ENCODE measurements at regions of chr1 and their contacts with region 1.

Region 1: DNA sequence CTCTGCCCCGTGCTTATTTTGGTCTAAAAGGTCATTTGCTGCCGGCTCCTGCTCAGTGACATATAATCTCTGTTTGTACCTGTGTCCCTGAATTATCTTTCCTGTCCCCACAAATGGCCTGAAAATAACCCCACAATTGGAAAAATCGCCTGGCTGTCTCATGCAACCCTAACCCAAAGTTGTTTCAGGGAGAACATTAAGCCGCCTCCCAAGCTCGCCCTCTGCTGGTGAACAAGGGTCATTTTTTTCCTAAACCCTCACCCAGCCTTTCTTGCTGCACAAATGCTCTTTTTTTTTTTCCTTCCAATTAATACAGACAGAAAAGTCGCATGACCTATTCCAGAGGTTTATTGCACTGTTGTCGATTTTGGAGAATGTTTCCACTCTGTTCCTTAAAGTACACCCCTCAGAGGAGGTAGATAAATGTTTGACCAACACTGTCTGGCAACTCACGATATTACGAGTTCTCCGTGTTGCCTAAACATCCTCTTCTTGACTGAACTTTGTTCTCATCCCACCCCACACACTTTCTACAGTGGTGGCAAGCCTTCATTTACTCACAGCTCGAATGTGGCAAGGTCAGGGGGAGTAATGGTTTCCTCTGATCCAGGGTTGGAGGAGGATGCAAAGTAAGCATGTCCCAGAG is 148.7 kb downstream of the ZZZ3 start:
- DNase-seq: peak; percentile 80
- H3K4me3 ChIP-seq: no peak overlapping the region
- H3K27ac ChIP-seq: no peak overlapping the region
- H3K4me1 ChIP-seq: peaks cover 22% of the 10 kb centered on the region
- H3K27me3 ChIP-seq: no peaks in the 10 kb centered on the region
- CTCF ChIP-seq: peak; percentile 77 to 81
- POLR2A ChIP-seq: no peak

Region 2: GRCh38 chr1:76901158-76901767 is 632.5 kb before region 1 on chr1:
- CTCF ChIA-PET with region 1: no interaction called
- POLR2A ChIA-PET with region 1: no interaction called
- dilution Hi-C with region 1: no loop called
- intact Hi-C with region 1: loop called (anchors 5 kb)
- DNase-seq: peak; percentile 41
- H3K4me3 ChIP-seq: no peak overlapping the region
- H3K27ac ChIP-seq: no peak overlapping the region
- H3K4me1 ChIP-seq: no peaks in the 10 kb centered on the region
- H3K27me3 ChIP-seq: no peaks in the 10 kb centered on the region
- CTCF ChIP-seq: peak; percentile 58 to 72
- POLR2A ChIP-seq: no peak

Region 3: DNA sequence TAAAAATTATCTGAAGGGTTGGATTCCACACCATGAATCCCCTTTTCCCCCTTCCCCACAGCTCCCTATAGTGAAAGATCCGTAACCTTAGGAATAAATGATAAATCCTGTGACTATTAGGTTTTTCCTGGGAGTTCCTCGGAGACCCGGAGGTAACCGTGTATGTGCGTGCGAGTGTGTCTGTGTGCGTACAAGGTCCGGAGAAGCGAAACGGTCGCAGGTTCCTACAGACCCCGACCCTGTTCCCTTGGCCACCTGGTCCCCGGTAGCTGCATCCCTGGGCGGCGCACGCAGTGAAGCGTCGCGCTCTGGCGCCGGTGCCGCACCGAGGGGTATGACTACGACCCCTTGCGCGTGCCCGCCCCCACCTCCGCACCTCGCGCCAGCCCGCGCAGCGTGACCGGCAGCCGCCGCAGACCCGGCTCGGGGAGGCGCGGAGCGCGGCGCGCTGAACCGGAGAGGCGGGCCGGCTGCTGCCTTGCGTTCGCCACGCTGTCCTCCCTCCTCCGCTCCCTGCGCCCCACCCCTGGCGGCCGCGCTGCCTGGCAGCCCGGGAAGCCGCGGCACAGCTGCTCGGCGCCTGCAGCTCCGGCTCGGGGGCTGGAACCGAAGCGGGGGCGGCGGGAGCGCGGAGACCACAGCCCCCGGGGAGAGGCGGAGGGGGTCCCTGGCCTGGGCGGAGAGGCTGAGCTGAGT is 252.1 kb before region 1 on chr1 and contains the start of gene AK5:
- CTCF ChIA-PET with region 1: interaction called, 9 read pairs
- POLR2A ChIA-PET with region 1: no interaction called
- dilution Hi-C with region 1: no loop called
- intact Hi-C with region 1: loop called (anchors 1 kb)
- DNase-seq: peak; percentile 59
- H3K4me3 ChIP-seq: peak within 1 kb of the TSS; percentile 42 to 62 (median 57)
- H3K27ac ChIP-seq: no peak within 1 kb of the TSS
- H3K4me1 ChIP-seq: peaks cover 17% of the 10 kb centered on the region
- H3K27me3 ChIP-seq: peaks cover 3 to 21% of the 10 kb centered on the region in 2 experiments
- CTCF ChIP-seq: no peak
- POLR2A ChIP-seq: no peak
- total RNA-seq, gene AK5: 3.3 and 7.5 TPM in 2 replicates

Region 4: DNA sequence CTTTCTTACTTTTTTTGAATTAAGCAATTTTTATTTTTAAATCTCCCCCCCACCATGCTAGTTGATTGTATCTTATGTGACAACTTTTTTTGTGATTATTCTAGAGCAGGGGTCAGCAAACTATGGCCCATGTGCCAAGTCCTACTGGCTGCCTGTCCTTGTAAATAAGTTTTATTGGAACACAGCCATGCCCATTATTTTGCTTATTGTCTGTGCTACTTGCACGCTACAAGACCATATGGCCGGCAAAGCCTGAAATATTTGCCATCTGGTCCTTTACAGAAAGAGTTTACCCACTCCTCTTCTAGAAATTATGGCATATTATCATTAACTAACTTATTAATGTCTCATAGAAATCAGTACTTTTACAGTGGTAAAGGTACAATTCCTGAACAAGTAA is 200.3 kb before region 1 on chr1:
- CTCF ChIA-PET with region 1: no interaction called
- POLR2A ChIA-PET with region 1: no interaction called
- dilution Hi-C with region 1: no loop called
- intact Hi-C with region 1: no loop called
- DNase-seq: no peak
- H3K4me3 ChIP-seq: no peak overlapping the region
- H3K27ac ChIP-seq: no peak overlapping the region
- H3K4me1 ChIP-seq: no peaks in the 10 kb centered on the region
- H3K27me3 ChIP-seq: no peaks in the 10 kb centered on the region
- CTCF ChIP-seq: no peak
- POLR2A ChIP-seq: no peak

Region 5: DNA sequence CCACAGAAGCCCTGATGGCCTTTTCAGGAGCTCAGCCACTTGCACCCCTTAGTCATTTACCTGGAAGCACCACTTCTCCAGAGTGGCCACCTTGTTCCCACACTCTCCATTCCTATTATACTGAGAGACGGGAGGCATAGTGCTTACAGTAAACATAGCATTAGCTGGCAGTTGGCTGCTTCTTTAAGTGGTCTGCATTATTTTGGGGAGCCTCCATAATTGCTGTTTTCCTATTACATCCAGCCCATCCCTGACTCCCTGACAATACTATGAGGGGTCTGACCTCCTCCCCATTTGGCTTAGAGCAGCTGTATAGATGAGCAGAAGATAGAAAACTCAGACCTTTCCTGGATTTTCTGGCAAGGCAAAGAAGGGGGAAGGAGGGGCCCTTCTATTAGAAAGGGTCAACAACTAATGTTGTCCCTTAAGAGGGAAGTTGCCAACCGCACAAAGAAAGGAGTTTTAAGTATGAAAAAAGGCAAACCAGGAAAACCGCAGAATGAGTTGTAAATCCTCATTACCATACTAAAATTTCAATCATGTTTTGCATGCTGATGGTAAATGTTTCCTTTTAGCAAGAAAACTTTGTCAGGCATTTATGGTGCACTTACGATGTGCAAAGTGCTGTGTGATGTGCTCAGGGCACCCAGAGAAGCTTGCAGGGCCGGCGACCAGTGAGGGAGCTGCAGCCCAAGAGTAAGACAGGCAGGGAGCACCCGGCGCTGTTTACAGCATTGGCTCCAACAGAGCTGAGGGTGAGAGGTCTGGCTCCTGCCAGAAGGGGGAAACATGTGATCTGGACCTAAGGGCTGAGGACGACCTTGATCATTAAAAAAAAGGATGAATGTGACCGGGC is 18.6 kb before region 1 on chr1:
- CTCF ChIA-PET with region 1: interaction called, 45 read pairs
- POLR2A ChIA-PET with region 1: no interaction called
- dilution Hi-C with region 1: no loop called
- intact Hi-C with region 1: loop called (anchors 1 kb)
- DNase-seq: peak; percentile 68
- H3K4me3 ChIP-seq: no peak overlapping the region
- H3K27ac ChIP-seq: peak overlapping the region; percentile 74
- H3K4me1 ChIP-seq: peaks cover 32% of the 10 kb centered on the region
- H3K27me3 ChIP-seq: no peaks in the 10 kb centered on the region
- CTCF ChIP-seq: peak in 1 of 2 donors; percentile 24
- POLR2A ChIP-seq: no peak

Region 6: GRCh38 chr1:77900687-77901293 is 367.0 kb after region 1 on chr1:
- CTCF ChIA-PET with region 1: interaction called, 4 read pairs
- POLR2A ChIA-PET with region 1: no interaction called
- dilution Hi-C with region 1: no loop called
- intact Hi-C with region 1: loop called (anchors 10 kb)
- DNase-seq: peak; percentile 83
- H3K4me3 ChIP-seq: no peak overlapping the region
- H3K27ac ChIP-seq: no peak overlapping the region
- H3K4me1 ChIP-seq: peaks cover 4% of the 10 kb centered on the region
- H3K27me3 ChIP-seq: no peaks in the 10 kb centered on the region
- CTCF ChIP-seq: peak; percentile 56 to 63
- POLR2A ChIP-seq: no peak